ENCODE measurements at regions of chr1 and their contacts with region 1.

Region 1: DNA sequence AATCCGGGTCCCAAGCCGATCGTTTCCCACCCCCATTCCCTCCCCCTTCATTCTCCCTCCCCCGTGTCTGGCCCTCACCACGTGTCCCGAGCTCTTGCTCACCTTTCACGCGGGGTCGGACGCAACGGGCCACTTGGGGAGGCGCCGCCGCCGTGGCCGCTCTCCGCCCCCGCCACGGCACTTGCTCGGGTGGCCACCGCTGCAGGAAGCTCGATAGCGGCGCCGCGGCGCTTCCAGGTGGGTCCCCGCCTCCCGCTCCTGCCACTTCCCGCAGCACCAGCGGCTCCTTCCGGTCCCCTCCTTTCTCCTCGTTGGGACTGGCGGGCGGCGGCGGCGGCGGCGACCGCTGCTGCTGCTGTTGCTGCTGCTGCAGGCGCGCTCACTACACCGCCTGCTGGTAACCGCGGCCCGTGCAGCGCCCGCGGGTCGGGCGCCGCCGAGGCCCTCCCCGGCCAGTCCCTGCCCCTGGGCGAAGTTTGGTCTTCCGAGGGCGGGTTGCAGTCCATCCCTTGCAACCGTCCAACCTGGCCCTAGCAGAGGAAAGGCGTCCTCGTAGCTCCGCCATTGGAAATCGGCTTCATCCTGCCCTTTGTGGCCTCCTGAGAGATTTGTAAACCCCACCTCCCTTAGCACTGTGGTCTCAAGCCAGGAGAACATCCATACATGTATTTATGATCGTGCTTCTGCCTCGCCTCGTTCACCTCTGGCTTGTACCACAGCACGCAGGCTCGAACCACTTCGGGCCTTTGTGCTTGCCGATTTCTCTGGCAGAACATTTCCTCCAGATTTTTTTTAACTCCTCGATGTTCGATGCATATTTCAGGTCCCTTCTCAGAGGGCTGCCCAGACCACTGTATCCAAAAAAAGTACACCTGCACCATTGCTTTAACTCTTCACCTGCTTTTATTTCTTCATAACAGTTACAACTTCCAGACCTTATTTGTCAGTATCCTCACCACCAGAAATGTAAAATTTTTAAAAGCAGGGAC is 996 bp upstream of the ZZZ3 start:
- DNase-seq: peak; percentile 83 to 94 (median 92)
- ATAC-seq: peak; percentile 86
- H3K4me3 ChIP-seq: peak overlapping the region; percentile 91
- H3K4me3 Mint-ChIP-seq: peak overlapping the region; percentile 80 to 97 (median 91)
- H3K27ac ChIP-seq: peak overlapping the region; percentile 92
- H3K27ac Mint-ChIP-seq: peak overlapping the region; percentile 89 to 100 (median 97)
- H3K4me1 ChIP-seq: peaks cover 15 to 33% of the 10 kb centered on the region in 2 donors
- H3K4me1 Mint-ChIP-seq: peaks cover 20 to 51% (median 40%) of the 10 kb centered on the region in 7 donors
- H3K27me3 ChIP-seq: no peaks in the 10 kb centered on the region
- H3K27me3 Mint-ChIP-seq: no peaks in the 10 kb centered on the region

Region 2: DNA sequence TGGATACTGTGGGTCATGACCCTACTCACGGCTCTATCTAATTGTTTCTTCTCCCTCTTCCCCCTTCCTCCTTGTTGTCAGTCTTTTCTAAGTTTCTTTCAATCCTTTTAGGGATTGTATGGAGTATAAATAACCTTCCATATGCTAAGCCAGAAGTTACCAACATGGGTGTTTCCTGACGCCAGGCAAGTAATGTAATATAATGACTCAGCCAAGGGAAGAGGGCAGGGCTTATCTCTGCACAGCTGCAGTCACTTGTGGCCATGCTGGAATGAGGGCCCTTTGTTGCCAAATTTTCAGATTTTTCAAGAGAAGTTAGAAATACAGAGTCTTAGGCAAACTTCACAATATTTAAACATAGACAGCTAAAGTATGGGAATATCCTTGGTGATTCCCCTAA is 1414.3 kb before region 1 on chr1:
- CTCF ChIA-PET with region 1: no interaction called
- POLR2A ChIA-PET with region 1: no interaction called
- intact Hi-C with region 1: loop called in 1 of 2 experiments (anchors 10 kb)
- DNase-seq: no peak
- ATAC-seq: no peak
- H3K4me3 ChIP-seq: no peak overlapping the region
- H3K4me3 Mint-ChIP-seq: peak overlapping the region in 7 of 10 donors; percentile 63 to 86 (median 70)
- H3K27ac ChIP-seq: no peak overlapping the region
- H3K27ac Mint-ChIP-seq: peak overlapping the region; percentile 27 to 95 (median 58)
- H3K4me1 ChIP-seq: peaks cover 29 to 51% of the 10 kb centered on the region in 2 donors
- H3K4me1 Mint-ChIP-seq: peaks cover 34 to 93% (median 79%) of the 10 kb centered on the region in 7 donors
- H3K27me3 ChIP-seq: no peaks in the 10 kb centered on the region
- H3K27me3 Mint-ChIP-seq: peaks cover 0 to 3% (median 0%) of the 10 kb centered on the region in 5 donors

Region 3: GRCh38 chr1:77219166-77219887 is 464.1 kb before region 1 on chr1 and contains the start of gene PIGK:
- CTCF ChIA-PET with region 1: no interaction called
- POLR2A ChIA-PET with region 1: no interaction called
- intact Hi-C with region 1: loop called (anchors 1 kb)
- DNase-seq: peak; percentile 62 to 87 (median 84)
- ATAC-seq: peak; percentile 99
- H3K4me3 ChIP-seq: peak within 1 kb of the TSS; percentile 99
- H3K4me3 Mint-ChIP-seq: peak within 1 kb of the TSS; percentile 92 to 97 (median 96)
- H3K27ac ChIP-seq: peak within 1 kb of the TSS; percentile 89
- H3K27ac Mint-ChIP-seq: peak within 1 kb of the TSS; percentile 91 to 99 (median 96)
- H3K4me1 ChIP-seq: peaks cover 13 to 15% of the 10 kb centered on the region in 2 donors
- H3K4me1 Mint-ChIP-seq: peaks cover 34 to 75% (median 62%) of the 10 kb centered on the region in 7 donors
- H3K27me3 ChIP-seq: no peaks in the 10 kb centered on the region
- H3K27me3 Mint-ChIP-seq: no peaks in the 10 kb centered on the region
- total RNA-seq, gene PIGK: 17.7 to 31.3 (median 20.6) TPM

Region 4: GRCh38 chr1:77582905-77583304 is 100.5 kb before region 1 on chr1:
- CTCF ChIA-PET with region 1: no interaction called
- POLR2A ChIA-PET with region 1: no interaction called
- intact Hi-C with region 1: loop called in 1 of 2 experiments (anchors 2 kb)
- DNase-seq: no peak
- ATAC-seq: no peak
- H3K4me3 ChIP-seq: no peak overlapping the region
- H3K4me3 Mint-ChIP-seq: no peak overlapping the region
- H3K27ac ChIP-seq: no peak overlapping the region
- H3K27ac Mint-ChIP-seq: no peak overlapping the region
- H3K4me1 ChIP-seq: no peaks in the 10 kb centered on the region
- H3K4me1 Mint-ChIP-seq: peaks cover 7 to 26% (median 17%) of the 10 kb centered on the region in 7 donors
- H3K27me3 ChIP-seq: no peaks in the 10 kb centered on the region
- H3K27me3 Mint-ChIP-seq: no peaks in the 10 kb centered on the region

Region 5: GRCh38 chr1:77614037-77614436 is 69.4 kb before region 1 on chr1:
- CTCF ChIA-PET with region 1: no interaction called
- POLR2A ChIA-PET with region 1: no interaction called
- intact Hi-C with region 1: no loop called
- DNase-seq: no peak
- ATAC-seq: no peak
- H3K4me3 ChIP-seq: no peak overlapping the region
- H3K4me3 Mint-ChIP-seq: no peak overlapping the region
- H3K27ac ChIP-seq: no peak overlapping the region
- H3K27ac Mint-ChIP-seq: no peak overlapping the region
- H3K4me1 ChIP-seq: no peaks in the 10 kb centered on the region
- H3K4me1 Mint-ChIP-seq: peaks cover 0 to 23% (median 10%) of the 10 kb centered on the region in 7 donors
- H3K27me3 ChIP-seq: no peaks in the 10 kb centered on the region
- H3K27me3 Mint-ChIP-seq: no peaks in the 10 kb centered on the region

Region 6: GRCh38 chr1:77779529-77780281 is 96.3 kb after region 1 on chr1 and contains the start of gene MIGA1:
- CTCF ChIA-PET with region 1: no interaction called
- POLR2A ChIA-PET with region 1: interaction called, 3 read pairs
- intact Hi-C with region 1: loop called (anchors 1 kb)
- DNase-seq: peak; percentile 61 to 92 (median 86)
- ATAC-seq: peak; percentile 99
- H3K4me3 ChIP-seq: peak within 1 kb of the TSS; percentile 68
- H3K4me3 Mint-ChIP-seq: peak within 1 kb of the TSS; percentile 90 to 98 (median 94)
- H3K27ac ChIP-seq: peak within 1 kb of the TSS; percentile 87
- H3K27ac Mint-ChIP-seq: peak within 1 kb of the TSS; percentile 88 to 96 (median 93)
- H3K4me1 ChIP-seq: peaks cover 11 to 15% of the 10 kb centered on the region in 2 donors
- H3K4me1 Mint-ChIP-seq: peaks cover 21 to 54% (median 49%) of the 10 kb centered on the region in 7 donors
- H3K27me3 ChIP-seq: no peaks in the 10 kb centered on the region
- H3K27me3 Mint-ChIP-seq: peaks cover 0 to 3% (median 0%) of the 10 kb centered on the region in 5 donors
- total RNA-seq, gene MIGA1: 12.1 to 23.5 (median 15.9) TPM

Region 7: DNA sequence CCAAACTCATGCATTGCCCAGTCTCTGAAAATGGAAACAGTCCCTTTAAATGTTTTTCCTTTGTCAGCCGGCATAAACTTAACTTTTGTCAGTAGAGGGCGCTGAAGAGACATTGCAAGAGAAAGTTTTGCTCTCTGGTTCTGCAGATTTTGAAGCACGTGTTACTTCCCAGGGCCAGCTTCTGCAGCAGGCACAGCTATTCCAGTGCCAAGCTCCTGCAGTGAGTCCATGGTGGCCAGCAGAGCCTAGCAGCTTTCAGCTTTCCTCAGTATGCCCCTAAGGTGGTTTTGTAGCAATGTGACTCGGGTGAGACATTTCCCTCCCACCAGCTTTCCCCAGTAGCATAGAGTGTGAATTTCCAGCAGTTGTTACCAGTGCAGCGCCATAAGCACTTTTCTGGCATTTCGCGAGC is 934.2 kb after region 1 on chr1:
- CTCF ChIA-PET with region 1: no interaction called
- POLR2A ChIA-PET with region 1: no interaction called
- intact Hi-C with region 1: loop called in 1 of 2 experiments (anchors 5 kb)
- DNase-seq: peak; percentile 13 to 82 (median 79)
- ATAC-seq: peak; percentile 84
- H3K4me3 ChIP-seq: no peak overlapping the region
- H3K4me3 Mint-ChIP-seq: peak overlapping the region in 3 of 10 donors; percentile 26 to 56 (median 44)
- H3K27ac ChIP-seq: no peak overlapping the region
- H3K27ac Mint-ChIP-seq: peak overlapping the region in 8 of 9 donors; percentile 23 to 99 (median 72)
- H3K4me1 ChIP-seq: peaks cover 7 to 19% of the 10 kb centered on the region in 2 donors
- H3K4me1 Mint-ChIP-seq: peaks cover 18 to 51% (median 42%) of the 10 kb centered on the region in 7 donors
- H3K27me3 ChIP-seq: no peaks in the 10 kb centered on the region
- H3K27me3 Mint-ChIP-seq: peaks cover 0 to 14% (median 0%) of the 10 kb centered on the region in 5 donors